ENCODE measurements at regions of chr2 and their contacts with region 1.

Region 1: GRCh38 chr2:118882709-118883210 is 35.3 kb upstream of the EN1 start:
- DNase-seq: peak; percentile 43 to 82 (median 64)
- ATAC-seq: peak; percentile 83 to 89
- H3K4me3 Mint-ChIP-seq: peak overlapping the region; percentile 66 to 87 (median 84)
- H3K27ac Mint-ChIP-seq: peak overlapping the region in 8 of 10 donors; percentile 67 to 92 (median 84)
- H3K4me1 Mint-ChIP-seq: peaks cover 17 to 24% (median 22%) of the 10 kb centered on the region in 4 donors
- H3K27me3 Mint-ChIP-seq: peaks cover 4 to 19% (median 6%) of the 10 kb centered on the region in 5 donors

Region 2: DNA sequence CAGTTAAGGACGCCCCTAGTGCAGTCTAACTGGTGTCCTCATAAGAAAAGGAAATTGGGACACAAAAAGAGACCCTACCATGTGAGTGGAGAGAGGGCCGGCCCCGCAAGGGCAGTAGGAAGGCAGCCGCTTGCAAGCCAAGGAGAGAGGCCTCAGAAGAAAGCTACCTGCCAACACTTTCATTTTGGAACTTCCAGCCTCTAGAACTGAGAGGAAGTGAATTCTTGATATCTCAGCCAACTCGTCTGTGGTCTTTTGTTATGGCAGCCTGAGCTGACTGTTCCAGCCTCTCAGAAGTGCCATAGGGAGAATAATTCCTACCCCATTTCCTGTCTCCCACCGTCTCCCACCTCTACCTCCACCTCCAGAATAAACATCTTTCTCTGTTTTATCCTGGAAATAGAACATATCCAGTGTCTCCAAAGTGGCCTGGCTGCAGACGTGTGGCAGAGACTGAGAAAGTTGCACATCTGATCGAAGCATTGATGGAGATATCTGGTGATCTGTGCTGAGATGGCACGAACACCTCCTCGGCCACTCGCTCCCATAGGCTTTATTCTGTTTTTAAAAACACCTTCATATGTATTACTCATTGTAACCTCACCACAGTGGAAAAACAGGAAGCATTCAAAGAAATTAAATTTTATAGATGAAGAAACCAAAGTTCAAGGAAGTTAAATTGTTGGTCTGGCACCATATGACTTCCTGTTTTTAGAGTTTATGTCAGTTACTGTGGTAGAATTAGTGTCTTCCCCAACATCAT is 19.7 kb after region 1 on chr2:
- POLR2A ChIA-PET with region 1: interaction called, 12 read pairs
- DNase-seq: peak in 1 of 10 donors; percentile 21
- ATAC-seq: peak; percentile 66 to 73
- H3K4me3 Mint-ChIP-seq: peak overlapping the region in 8 of 10 donors; percentile 52 to 75 (median 64)
- H3K27ac Mint-ChIP-seq: peak overlapping the region in 9 of 10 donors; percentile 44 to 97 (median 90)
- H3K4me1 Mint-ChIP-seq: peaks cover 15 to 32% (median 28%) of the 10 kb centered on the region in 4 donors
- H3K27me3 Mint-ChIP-seq: peaks cover 0 to 2% (median 0%) of the 10 kb centered on the region in 5 donors

Measured in naive thymus-derived CD8-positive, alpha-beta T cell (primary cell).